GM12878 (cell line): ENCODE measurements at regions of chr6 and their contacts with region 1.

Region 1: GRCh38 chr6:157045831-157046454 is 268.8 kb downstream of the ARID1B start:
- DNase-seq: no peak
- ATAC-seq: peak; percentile 41; the same call in 2 of the 3 replicates
- H3K4me3 ChIP-seq: no peak overlapping the region
- H3K27ac ChIP-seq: no peak overlapping the region
- H3K4me1 ChIP-seq: peaks cover 10% of the 10 kb centered on the region
- H3K27me3 ChIP-seq: no peaks in the 10 kb centered on the region
- CTCF ChIP-seq: peak; percentile 36 to 49 (median 42)
- EP300 ChIP-seq: no peak
- POLR2A ChIP-seq: no peak
- RAD21 ChIP-seq: peak; percentile 51

Region 2: DNA sequence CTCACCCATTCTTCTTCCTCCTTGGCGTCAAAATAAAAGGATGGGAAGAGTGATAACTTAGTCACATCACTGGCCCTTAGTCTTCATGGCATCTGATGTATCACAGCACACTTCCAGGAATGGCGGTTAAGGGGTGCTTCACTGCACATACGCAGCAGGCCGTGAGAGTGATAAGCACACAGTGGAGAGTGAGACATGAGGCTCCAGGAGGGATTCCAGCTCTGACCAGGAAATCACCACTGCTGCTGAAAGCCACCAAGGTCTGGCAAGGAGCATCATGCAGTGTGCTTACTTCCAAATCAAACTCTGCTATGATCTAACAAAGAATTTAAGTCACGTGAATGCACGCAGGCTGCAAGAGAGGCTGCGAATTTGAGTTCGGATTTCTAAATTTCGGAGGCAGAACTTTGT is 206.3 kb before region 1 on chr6:
- CTCF ChIA-PET with region 1: no interaction called
- POLR2A ChIA-PET with region 1: no interaction called
- RAD21 ChIA-PET with region 1: no interaction called
- SMC1A ChIA-PET with region 1: no interaction called
- in situ Hi-C with region 1: no loop called
- intact Hi-C with region 1: no loop called
- DNase-seq: no peak
- ATAC-seq: no peak
- H3K4me3 ChIP-seq: no peak overlapping the region
- H3K27ac ChIP-seq: no peak overlapping the region
- H3K4me1 ChIP-seq: peaks cover 10% of the 10 kb centered on the region
- H3K27me3 ChIP-seq: no peaks in the 10 kb centered on the region
- CTCF ChIP-seq: no peak
- EP300 ChIP-seq: no peak
- POLR2A ChIP-seq: peak; percentile 59
- RAD21 ChIP-seq: no peak

Region 3: GRCh38 chr6:157056275-157056674 is 10.3 kb after region 1 on chr6:
- CTCF ChIA-PET with region 1: interaction called, 5 read pairs
- POLR2A ChIA-PET with region 1: no interaction called
- RAD21 ChIA-PET with region 1: interaction called, 4 read pairs
- SMC1A ChIA-PET with region 1: interaction called, 6 read pairs
- in situ Hi-C with region 1: no loop called
- intact Hi-C with region 1: loop called (anchors 1 kb)
- DNase-seq: no peak
- ATAC-seq: peak; percentile 81
- H3K4me3 ChIP-seq: no peak overlapping the region
- H3K27ac ChIP-seq: no peak overlapping the region
- H3K4me1 ChIP-seq: peaks cover 15% of the 10 kb centered on the region
- H3K27me3 ChIP-seq: no peaks in the 10 kb centered on the region
- CTCF ChIP-seq: no peak
- EP300 ChIP-seq: no peak
- POLR2A ChIP-seq: no peak
- RAD21 ChIP-seq: no peak

Region 4: GRCh38 chr6:157148391-157149323 is 102.7 kb after region 1 on chr6:
- CTCF ChIA-PET with region 1: no interaction called
- POLR2A ChIA-PET with region 1: no interaction called
- RAD21 ChIA-PET with region 1: no interaction called
- SMC1A ChIA-PET with region 1: no interaction called
- in situ Hi-C with region 1: no loop called
- intact Hi-C with region 1: no loop called
- DNase-seq: no peak
- ATAC-seq: no peak
- H3K4me3 ChIP-seq: no peak overlapping the region
- H3K27ac ChIP-seq: no peak overlapping the region
- H3K4me1 ChIP-seq: no peaks in the 10 kb centered on the region
- H3K27me3 ChIP-seq: no peaks in the 10 kb centered on the region
- CTCF ChIP-seq: no peak
- EP300 ChIP-seq: no peak
- POLR2A ChIP-seq: 0 out of 2 replicates have a peak, but pooled peaks have one; percentile 22
- RAD21 ChIP-seq: no peak

Region 5: DNA sequence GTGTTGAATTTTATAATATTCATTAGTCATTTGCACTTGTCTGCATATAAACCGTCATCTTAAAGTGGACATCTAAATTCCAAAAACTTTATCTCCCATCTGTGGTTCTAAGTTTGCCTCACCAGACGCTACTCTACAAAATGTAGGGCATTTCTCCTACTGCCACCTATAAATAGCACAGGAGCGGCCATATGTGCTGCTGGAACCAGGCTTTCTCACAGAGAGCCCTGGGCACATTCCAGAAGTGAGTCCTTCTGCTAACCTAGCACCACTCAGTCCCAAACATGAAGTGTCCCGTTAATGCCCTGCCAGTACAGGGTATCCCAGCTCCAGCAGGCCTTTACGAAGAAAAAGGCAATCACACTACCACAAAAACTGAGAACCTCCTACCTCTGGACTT is 123.7 kb after region 1 on chr6:
- CTCF ChIA-PET with region 1: no interaction called
- POLR2A ChIA-PET with region 1: no interaction called
- RAD21 ChIA-PET with region 1: no interaction called
- SMC1A ChIA-PET with region 1: no interaction called
- in situ Hi-C with region 1: no loop called
- intact Hi-C with region 1: no loop called
- DNase-seq: no peak
- ATAC-seq: no peak
- H3K4me3 ChIP-seq: no peak overlapping the region
- H3K27ac ChIP-seq: no peak overlapping the region
- H3K4me1 ChIP-seq: no peaks in the 10 kb centered on the region
- H3K27me3 ChIP-seq: no peaks in the 10 kb centered on the region
- CTCF ChIP-seq: no peak
- EP300 ChIP-seq: no peak
- POLR2A ChIP-seq: no peak
- RAD21 ChIP-seq: no peak